GM18951 (cell line): ENCODE measurements at regions of chr1 and their contacts with region 1.

Region 1: GRCh38 chr1:20151906-20152598 is 12.9 kb downstream of the PLA2G2F start:
- POLR2A ChIP-seq: no peak

Region 2: GRCh38 chr1:19765623-19766022 is 386.4 kb before region 1 on chr1:
- in situ Hi-C with region 1: no loop called
- POLR2A ChIP-seq: no peak

Region 3: GRCh38 chr1:19918057-19918456 is 234.0 kb before region 1 on chr1:
- in situ Hi-C with region 1: loop called (anchors 25 kb)
- POLR2A ChIP-seq: no peak